A673 (cell line): ENCODE measurements at regions of chr15 and their contacts with region 1.

Region 1: GRCh38 chr15:64430000-64430735 is 30.2 kb upstream of the ZNF609 start:
- DNase-seq: peak; percentile 93
- H3K4me3 ChIP-seq: no peak overlapping the region
- H3K27ac ChIP-seq: peak overlapping the region; percentile 1
- H3K4me1 ChIP-seq: peaks cover 20% of the 10 kb centered on the region
- H3K27me3 ChIP-seq: no peaks in the 10 kb centered on the region
- CTCF ChIP-seq: no peak

Region 2: DNA sequence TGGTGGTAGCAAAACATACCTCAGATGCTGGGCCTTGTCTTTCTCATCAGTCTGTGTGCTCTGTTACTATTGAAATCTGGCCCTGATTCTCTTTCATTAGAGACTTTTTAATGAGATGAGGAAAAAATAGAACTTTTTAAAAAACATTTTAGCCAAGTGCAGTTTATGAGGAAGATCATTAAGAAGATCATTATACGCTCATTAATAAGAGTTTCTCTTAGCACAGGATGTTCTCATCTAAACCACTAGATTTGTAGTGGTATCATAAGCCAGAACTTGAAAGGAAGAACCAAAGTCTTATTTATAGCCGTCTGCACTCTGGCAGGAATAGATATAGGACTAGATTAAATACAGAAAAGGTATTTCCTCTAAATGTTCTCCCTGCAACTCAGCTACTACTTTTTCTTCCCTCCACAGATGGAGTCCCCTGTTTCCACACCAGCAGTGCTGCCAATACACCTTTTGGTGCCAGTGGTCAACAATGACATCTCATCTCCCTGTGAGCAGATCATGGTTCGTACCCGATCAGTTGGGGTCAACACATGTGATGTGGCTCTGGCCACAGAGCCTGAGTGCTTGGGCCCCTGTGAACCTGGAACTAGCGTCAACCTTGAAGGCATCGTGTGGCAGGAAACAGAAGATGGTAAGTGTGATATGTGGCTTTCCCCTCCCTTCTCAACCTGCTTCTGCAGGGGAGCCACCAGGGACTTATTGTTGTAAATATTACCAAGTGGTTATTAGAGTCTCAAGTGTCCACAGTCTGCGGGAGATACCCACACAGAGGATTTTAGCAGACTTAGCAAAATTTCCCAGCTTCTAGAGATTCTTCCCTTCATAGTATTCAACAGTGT is 192.5 kb after region 1 on chr15:
- CTCF ChIA-PET with region 1: interaction called, 3 read pairs
- POLR2A ChIA-PET with region 1: interaction called, 33 read pairs
- intact Hi-C with region 1: no loop called
- DNase-seq: no peak
- H3K4me3 ChIP-seq: no peak overlapping the region
- H3K27ac ChIP-seq: no peak overlapping the region
- H3K4me1 ChIP-seq: peaks cover 54% of the 10 kb centered on the region
- H3K27me3 ChIP-seq: no peaks in the 10 kb centered on the region
- CTCF ChIP-seq: no peak

Region 3: DNA sequence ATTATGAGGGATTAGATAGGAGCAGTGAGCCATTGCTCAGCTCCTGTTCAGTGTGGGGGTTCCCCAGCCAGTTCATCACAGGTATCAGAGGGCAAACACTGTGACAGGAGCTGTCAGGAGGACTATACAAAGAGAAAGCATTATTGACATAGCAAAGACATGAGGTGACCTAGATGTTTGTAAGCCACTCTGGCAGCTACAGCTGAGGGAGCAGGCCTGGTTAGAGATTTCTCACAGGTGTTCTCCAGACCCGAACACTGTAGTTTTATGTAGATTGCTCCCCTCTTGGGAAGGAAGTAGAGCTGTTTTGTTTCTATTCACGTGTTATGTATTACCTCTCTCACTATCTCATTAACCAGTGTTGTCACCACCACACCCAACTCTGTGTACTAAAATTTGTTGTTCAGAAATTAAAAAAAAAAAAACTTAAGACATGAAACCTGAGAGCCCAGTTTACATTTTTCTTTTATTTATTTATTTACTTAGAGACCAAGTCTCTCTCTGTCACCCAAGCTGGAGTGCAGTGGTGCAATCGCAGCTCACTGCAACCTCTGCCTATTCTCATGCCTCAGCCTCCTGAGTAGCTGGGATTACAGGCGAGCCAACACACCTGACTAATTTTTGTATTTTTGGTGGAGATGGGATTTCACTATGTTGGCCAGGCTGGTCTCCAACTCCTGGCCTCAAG is 221.5 kb after region 1 on chr15:
- CTCF ChIA-PET with region 1: interaction called, 8 read pairs
- POLR2A ChIA-PET with region 1: no interaction called
- intact Hi-C with region 1: loop called (anchors 10 kb)
- DNase-seq: no peak
- H3K4me3 ChIP-seq: no peak overlapping the region
- H3K27ac ChIP-seq: no peak overlapping the region
- H3K4me1 ChIP-seq: no peaks in the 10 kb centered on the region
- H3K27me3 ChIP-seq: no peaks in the 10 kb centered on the region
- CTCF ChIP-seq: no peak

Region 4: DNA sequence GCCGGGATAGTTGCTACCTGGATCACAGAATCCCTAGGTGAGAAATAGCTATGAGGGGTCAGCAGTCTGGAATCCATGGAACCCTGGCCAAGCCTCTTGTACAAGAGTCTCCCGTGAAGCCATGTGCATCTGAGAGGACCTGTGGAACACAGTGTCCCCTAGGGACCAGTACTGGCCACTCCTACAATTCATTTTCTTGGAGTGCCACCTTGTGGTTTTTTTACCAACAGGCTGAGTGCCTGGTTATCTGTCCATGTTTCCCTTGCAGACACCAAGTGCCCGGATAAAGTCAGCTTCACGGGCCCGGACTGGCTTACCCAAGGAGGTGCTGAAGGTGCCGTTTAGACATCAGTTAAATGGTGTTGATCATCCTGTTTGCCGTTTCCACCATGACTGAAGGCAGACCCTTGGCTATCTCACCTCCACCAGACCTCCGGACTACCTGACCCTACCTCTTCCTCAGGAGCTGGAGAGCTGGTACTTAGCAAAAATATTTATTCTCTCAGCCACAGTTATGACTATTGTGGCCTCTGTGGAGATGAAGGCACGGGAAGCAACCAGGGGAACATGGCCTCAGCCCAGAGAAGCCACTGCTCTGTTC is 251.4 kb after region 1 on chr15:
- CTCF ChIA-PET with region 1: interaction called, 3 read pairs
- POLR2A ChIA-PET with region 1: no interaction called
- intact Hi-C with region 1: loop called (anchors 1 kb)
- DNase-seq: peak; percentile 81
- H3K4me3 ChIP-seq: no peak overlapping the region
- H3K27ac ChIP-seq: no peak overlapping the region
- H3K4me1 ChIP-seq: no peaks in the 10 kb centered on the region
- H3K27me3 ChIP-seq: no peaks in the 10 kb centered on the region
- CTCF ChIP-seq: peak; percentile 65